ENCODE measurements at regions of chr11 and their contacts with region 1.

Region 1: GRCh38 chr11:125724125-125724524 is 22.0 kb upstream of the PATE1 start:
- DNase-seq: no peak
- H3K4me3 ChIP-seq: no peak overlapping the region
- H3K27ac ChIP-seq: no peak overlapping the region
- H3K4me1 ChIP-seq: no peaks in the 10 kb centered on the region
- H3K27me3 ChIP-seq: no peaks in the 10 kb centered on the region
- CTCF ChIP-seq: peak in 1 of 3 experiments; percentile 9

Region 2: DNA sequence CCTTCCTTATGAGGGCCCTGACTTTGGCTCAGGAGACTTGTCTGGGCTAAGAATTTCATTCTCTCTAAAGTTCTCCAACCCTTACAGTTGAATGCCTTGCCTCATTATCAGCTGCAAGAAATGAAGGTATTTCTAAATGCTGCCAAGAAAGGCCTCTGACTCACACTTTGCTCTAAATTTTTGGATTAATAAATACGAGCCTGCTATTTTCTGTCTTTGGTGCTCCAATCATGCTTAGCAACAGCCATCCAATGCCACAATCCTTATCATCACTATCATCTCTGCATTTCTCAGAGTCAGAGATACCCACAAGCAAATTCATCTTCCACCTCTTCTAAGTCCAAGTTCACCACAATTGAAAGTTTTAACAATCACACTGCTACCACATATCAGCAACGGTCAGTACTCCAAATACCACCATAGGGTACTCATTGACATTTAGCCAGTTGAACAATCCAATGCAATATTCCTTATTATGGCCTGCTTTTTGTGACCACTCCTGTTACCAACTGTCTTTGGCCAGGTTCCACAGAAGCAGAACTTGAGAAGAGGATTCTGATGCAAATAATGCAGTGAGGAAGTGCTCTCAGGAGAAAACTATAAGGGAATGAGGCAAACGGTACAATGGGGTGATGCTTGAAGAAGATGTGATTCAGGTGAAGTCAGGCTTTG is 48.8 kb after region 1 on chr11:
- intact Hi-C with region 1: no loop called
- DNase-seq: no peak
- H3K4me3 ChIP-seq: no peak overlapping the region
- H3K27ac ChIP-seq: peak overlapping the region in 1 of 2 donors; percentile 26
- H3K4me1 ChIP-seq: peaks cover 0 to 4% of the 10 kb centered on the region in 2 donors
- H3K27me3 ChIP-seq: no peaks in the 10 kb centered on the region
- CTCF ChIP-seq: no peak

Region 3: GRCh38 chr11:125874556-125875124 is 150.5 kb after region 1 on chr11:
- intact Hi-C with region 1: loop called (anchors 5 kb)
- DNase-seq: peak in 1 of 2 donors; percentile 67
- H3K4me3 ChIP-seq: no peak overlapping the region
- H3K27ac ChIP-seq: no peak overlapping the region
- H3K4me1 ChIP-seq: no peaks in the 10 kb centered on the region
- H3K27me3 ChIP-seq: no peaks in the 10 kb centered on the region
- CTCF ChIP-seq: peak; percentile 63 to 74 (median 66)